ENCODE measurements at regions of chr11 and their contacts with region 1.

Region 1: GRCh38 chr11:11520231-11521015 is 101.4 kb downstream of the GALNT18 start:
- DNase-seq: peak; percentile 52
- H3K4me3 ChIP-seq: no peak overlapping the region
- H3K27ac ChIP-seq: no peak overlapping the region
- H3K4me1 ChIP-seq: peaks cover 13% of the 10 kb centered on the region
- H3K27me3 ChIP-seq: no peaks in the 10 kb centered on the region
- CTCF ChIP-seq: no peak

Region 2: DNA sequence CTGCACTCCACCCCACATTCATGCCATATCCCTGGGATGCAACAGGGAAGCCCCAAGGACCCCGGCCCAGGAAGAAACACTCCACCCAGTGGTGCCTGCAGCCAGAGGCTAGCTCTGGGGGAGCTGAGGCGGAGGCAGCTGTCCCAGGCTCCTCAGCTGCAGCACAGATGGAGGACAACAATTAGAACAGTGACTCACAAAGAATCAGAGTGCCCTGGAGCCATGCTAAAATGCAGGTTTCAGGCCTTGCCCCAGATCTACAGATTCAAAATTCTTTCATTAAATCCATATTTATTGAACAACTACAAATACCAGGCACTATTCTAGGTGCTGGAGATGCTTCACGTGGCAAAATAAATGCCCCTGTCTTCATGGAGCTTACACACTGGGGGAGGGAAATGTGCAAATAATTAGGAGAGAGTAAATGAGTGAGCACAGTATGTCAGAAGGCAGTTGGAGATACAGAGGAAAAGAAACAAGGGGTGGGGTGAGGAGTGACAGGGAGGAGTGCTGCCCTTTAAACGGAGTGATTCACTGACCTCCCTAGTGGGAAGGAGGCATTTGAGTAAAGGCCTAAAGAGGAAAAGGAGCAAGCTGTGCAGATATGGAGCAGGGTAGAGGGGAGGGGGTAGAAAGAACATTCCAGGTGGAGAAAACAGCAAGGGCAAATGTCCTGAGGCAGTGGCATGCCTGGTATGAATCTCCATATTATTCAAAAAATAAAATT is 94.0 kb before region 1 on chr11:
- CTCF ChIA-PET with region 1: no interaction called
- dilution Hi-C with region 1: loop called (anchors 5 kb)
- in situ Hi-C with region 1: no loop called
- intact Hi-C with region 1: no loop called
- DNase-seq: peak; percentile 46
- H3K4me3 ChIP-seq: no peak overlapping the region
- H3K27ac ChIP-seq: no peak overlapping the region
- H3K4me1 ChIP-seq: peaks cover 41% of the 10 kb centered on the region
- H3K27me3 ChIP-seq: no peaks in the 10 kb centered on the region
- CTCF ChIP-seq: no peak

Region 3: GRCh38 chr11:11463405-11463804 is 57.0 kb before region 1 on chr11:
- CTCF ChIA-PET with region 1: no interaction called
- dilution Hi-C with region 1: loop called (anchors 10 kb)
- in situ Hi-C with region 1: no loop called
- intact Hi-C with region 1: no loop called
- DNase-seq: no peak
- H3K4me3 ChIP-seq: no peak overlapping the region
- H3K27ac ChIP-seq: no peak overlapping the region
- H3K4me1 ChIP-seq: no peaks in the 10 kb centered on the region
- H3K27me3 ChIP-seq: no peaks in the 10 kb centered on the region
- CTCF ChIP-seq: no peak

Region 4: DNA sequence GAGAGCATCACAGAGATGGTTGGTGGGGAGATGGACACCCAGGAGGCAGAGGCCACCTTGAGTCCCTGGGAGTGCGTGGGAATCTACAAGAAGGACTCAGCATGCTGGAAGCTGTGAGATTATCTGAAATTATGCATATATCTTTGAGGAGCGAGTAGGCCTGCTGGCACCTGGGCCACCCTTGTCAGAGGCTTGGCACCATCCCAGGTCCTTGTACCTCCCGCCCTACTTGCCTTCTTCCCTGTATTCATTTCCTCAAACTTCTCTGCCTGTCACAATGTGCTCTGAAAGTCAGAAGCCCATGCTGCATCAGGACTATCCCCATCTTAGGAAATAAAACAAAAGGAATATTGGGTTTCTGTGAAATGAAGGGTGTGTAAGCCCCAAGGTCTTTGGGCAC is 34.4 kb before region 1 on chr11:
- CTCF ChIA-PET with region 1: no interaction called
- dilution Hi-C with region 1: loop called (anchors 5 kb)
- in situ Hi-C with region 1: no loop called
- intact Hi-C with region 1: no loop called
- DNase-seq: no peak
- H3K4me3 ChIP-seq: no peak overlapping the region
- H3K27ac ChIP-seq: no peak overlapping the region
- H3K4me1 ChIP-seq: no peaks in the 10 kb centered on the region
- H3K27me3 ChIP-seq: no peaks in the 10 kb centered on the region
- CTCF ChIP-seq: no peak

Region 5: DNA sequence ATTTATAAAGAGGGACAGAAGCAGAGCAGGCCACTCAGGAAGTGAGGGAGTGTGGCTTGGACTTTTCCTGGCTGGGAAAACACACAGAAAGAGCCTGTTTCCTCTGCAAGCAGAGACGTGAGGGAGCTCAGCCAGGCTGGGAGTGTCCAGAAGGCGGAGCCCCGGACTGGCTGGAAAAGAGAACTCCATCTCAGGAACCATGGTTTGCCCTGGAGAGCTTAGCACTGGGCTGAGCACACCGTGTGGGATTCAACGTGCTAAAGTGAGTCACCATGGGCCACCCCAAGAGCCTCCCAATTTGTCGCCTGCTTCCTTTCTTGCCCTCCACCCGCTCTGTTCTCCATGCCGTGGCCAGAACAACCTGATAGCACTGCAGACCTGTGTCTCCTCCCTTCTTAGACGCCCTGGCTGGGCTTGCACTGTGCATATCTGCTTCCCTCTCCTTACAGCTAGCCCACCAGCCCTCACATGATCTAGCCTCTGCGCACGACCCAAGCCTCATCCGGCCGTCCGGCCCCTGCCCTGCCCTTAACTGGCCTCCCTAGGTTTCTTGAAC is 49.6 kb after region 1 on chr11:
- CTCF ChIA-PET with region 1: no interaction called
- dilution Hi-C with region 1: loop called (anchors 5 kb)
- in situ Hi-C with region 1: no loop called
- intact Hi-C with region 1: no loop called
- DNase-seq: peak; percentile 62
- H3K4me3 ChIP-seq: no peak overlapping the region
- H3K27ac ChIP-seq: peak overlapping the region; percentile 85
- H3K4me1 ChIP-seq: peaks cover 38% of the 10 kb centered on the region
- H3K27me3 ChIP-seq: no peaks in the 10 kb centered on the region
- CTCF ChIP-seq: no peak

Region 6: DNA sequence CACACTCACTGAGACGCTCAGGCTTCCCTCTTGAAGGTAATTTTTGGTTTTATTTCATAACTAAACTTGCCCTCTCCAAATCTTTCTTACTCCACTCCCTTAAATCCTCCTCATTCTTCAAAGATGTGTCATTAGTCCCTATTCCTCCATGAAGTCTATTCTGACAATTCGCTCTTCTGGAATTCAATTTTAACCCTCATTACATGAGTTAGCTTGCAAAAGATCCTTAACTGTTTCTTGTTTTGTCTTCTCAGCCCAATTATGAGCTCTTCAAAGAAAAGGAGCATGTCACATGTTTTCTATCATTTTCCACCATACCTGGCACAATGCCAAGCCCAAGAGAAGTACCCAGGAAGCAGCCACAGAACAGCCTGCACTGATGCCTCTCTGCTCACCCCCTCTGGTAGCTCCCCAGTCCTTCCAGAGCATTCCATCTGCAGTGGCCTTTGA is 88.4 kb after region 1 on chr11:
- CTCF ChIA-PET with region 1: no interaction called
- dilution Hi-C with region 1: loop called (anchors 5 kb)
- in situ Hi-C with region 1: no loop called
- intact Hi-C with region 1: no loop called
- DNase-seq: peak; percentile 68
- H3K4me3 ChIP-seq: no peak overlapping the region
- H3K27ac ChIP-seq: peak overlapping the region; percentile 45
- H3K4me1 ChIP-seq: peaks cover 26% of the 10 kb centered on the region
- H3K27me3 ChIP-seq: no peaks in the 10 kb centered on the region
- CTCF ChIP-seq: no peak

Measured in mammary epithelial cell (primary cell).